MCF 10A (cell line): ENCODE measurements at regions of chr19 and their contacts with region 1.

Region 1: GRCh38 chr19:58572818-58573657 is at the start of gene MZF1:
- DNase-seq: peak; percentile 100
- H3K4me3 Mint-ChIP-seq: peak within 1 kb of the TSS; percentile 89
- H3K27ac Mint-ChIP-seq: peak within 1 kb of the TSS; percentile 98
- H3K4me1 Mint-ChIP-seq: peaks cover 23% of the 10 kb centered on the region
- H3K27me3 Mint-ChIP-seq: no peaks in the 10 kb centered on the region
- CTCF ChIP-seq: no peak
- total RNA-seq, gene MZF1: 50.7 and 51.9 TPM in 2 replicates

Region 2: GRCh38 chr19:58284199-58284598 is 288.8 kb before region 1 on chr19:
- CTCF ChIA-PET with region 1: no interaction called
- POLR2A ChIA-PET with region 1: no interaction called
- intact Hi-C with region 1: no loop called
- DNase-seq: no peak
- H3K4me3 Mint-ChIP-seq: no peak overlapping the region
- H3K27ac Mint-ChIP-seq: no peak overlapping the region
- H3K4me1 Mint-ChIP-seq: peaks cover 18% of the 10 kb centered on the region
- H3K27me3 Mint-ChIP-seq: no peaks in the 10 kb centered on the region
- CTCF ChIP-seq: no peak

Region 3: GRCh38 chr19:58400916-58401839 is 171.9 kb before region 1 on chr19:
- CTCF ChIA-PET with region 1: no interaction called
- POLR2A ChIA-PET with region 1: no interaction called
- intact Hi-C with region 1: no loop called
- DNase-seq: peak; percentile 100
- H3K4me3 Mint-ChIP-seq: peak overlapping the region; percentile 92
- H3K27ac Mint-ChIP-seq: peak overlapping the region; percentile 95
- H3K4me1 Mint-ChIP-seq: peaks cover 13% of the 10 kb centered on the region
- H3K27me3 Mint-ChIP-seq: no peaks in the 10 kb centered on the region
- CTCF ChIP-seq: no peak

Region 4: DNA sequence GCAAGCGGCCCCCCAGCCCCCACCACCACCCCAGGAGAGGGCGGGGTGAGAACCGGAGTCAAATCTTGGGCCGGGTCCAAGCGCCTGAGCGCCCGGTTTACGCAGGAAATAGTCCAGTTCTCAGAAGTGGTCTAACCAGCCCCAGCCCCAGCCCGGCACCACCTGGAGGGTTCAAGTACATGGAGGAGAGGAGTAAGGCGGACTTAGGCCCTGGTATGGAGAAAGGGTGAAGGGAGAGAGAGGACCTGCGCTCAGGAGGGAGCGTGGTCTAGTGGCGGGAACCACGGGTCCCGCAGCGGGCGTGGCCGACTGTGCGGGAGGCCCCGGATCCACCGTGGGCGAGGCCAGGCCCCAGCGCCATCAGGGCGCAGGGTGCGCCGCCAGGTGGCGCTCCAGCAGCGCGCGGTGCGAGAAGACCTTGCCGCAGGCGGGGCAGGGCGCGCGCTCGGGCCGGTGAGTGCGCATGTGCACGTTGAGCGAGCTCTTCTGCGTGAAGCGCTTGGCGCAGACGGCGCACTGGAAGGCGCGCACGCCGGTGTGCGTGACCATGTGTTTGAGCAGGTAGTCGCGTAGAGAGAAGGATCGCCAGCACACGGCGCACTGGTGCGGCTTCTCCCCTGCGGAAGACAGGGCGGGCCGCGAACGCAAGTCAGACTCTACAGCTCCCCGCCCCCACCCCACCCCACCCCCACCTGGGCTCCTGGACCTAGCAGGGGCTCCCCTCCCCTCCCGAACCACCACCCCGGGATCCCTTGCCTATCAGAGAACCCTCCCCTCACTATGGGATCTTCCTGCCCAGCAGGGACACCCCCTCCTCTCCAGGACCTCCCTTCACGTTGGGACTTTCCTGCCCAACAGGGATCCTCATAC is 59.1 kb before region 1 on chr19:
- CTCF ChIA-PET with region 1: interaction called, 9 read pairs
- POLR2A ChIA-PET with region 1: interaction called, 28 read pairs
- intact Hi-C with region 1: no loop called
- DNase-seq: peak; percentile 92
- H3K4me3 Mint-ChIP-seq: peak overlapping the region; percentile 77
- H3K27ac Mint-ChIP-seq: peak overlapping the region; percentile 86
- H3K4me1 Mint-ChIP-seq: peaks cover 14% of the 10 kb centered on the region
- H3K27me3 Mint-ChIP-seq: no peaks in the 10 kb centered on the region
- CTCF ChIP-seq: peak; percentile 97

Region 5: DNA sequence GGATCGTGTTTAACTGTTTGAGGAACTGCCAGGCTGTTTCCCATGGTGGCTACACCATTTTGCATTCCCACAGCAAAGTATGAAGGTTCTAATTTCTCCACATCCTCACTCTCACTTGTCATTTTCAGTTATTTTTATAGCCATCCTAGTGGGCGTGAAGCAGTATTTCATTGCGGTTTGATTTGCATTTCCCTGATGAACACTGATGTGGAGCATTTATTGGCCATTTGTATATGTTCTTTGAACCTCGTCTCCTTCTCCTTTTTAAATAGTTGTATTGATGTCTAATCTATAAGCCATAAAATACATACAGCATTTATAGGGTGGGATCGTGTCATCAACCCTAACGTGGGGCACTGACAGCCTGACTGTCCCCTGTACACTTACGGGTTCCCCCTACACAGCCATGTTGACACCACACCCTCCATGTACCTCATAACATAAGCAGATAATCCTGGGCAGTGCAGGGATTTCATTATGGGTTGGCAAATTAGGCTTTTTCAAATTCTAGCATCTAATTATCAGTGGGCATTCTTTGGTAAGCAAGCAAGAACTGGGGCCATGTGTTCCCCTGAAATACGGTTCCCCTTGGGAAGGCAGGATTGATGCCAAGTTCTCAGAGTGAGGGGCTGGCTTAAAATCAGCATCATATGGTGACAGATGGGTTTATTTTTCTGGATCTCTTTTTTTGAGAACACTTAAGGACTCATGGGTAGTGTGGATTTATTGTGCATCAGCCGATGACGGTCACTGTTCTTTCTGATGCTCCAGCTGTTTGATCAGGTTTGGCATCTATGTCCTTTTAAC is 41.8 kb before region 1 on chr19:
- CTCF ChIA-PET with region 1: no interaction called
- POLR2A ChIA-PET with region 1: no interaction called
- intact Hi-C with region 1: no loop called
- DNase-seq: no peak
- H3K4me3 Mint-ChIP-seq: no peak overlapping the region
- H3K27ac Mint-ChIP-seq: no peak overlapping the region
- H3K4me1 Mint-ChIP-seq: no peaks in the 10 kb centered on the region
- H3K27me3 Mint-ChIP-seq: peaks cover 32% of the 10 kb centered on the region
- CTCF ChIP-seq: no peak

Region 6: DNA sequence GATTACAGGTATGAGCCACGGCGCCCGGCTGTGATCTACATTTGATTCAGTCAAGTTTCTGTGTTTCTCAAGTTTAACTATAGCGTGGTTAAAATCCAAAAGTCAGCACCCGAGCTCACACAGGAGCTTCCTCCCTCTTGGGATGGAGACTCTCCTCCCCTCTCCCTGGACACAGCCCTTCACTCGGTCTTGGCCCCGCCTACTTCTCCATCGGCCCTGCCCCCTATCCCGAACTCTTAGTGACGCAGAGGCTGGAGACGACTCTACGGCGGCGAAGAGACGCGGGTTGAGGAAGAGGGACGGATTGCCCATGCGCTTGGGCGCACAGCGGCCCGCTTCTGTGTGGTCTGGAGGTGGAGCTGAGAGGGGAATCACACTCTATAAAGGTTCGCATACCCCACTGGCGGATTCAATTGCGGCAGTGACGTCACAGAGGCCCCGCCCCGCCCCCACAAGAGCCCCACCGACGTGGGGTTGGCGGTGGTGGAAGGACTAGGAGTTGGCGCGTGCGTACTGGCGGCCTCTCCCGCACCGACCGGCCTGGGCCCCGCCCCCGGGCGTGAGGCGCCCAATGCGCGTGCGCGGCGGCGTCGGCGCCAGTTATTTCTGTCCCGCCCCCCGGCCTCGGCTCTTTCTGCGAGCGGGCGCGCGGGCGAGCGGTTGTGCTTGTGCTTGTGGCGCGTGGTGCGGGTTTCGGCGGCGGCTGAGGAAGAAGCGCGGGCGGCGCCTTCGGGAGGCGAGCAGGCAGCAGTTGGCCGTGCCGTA is 29.0 kb before region 1 on chr19 and contains the start of gene TRIM28:
- CTCF ChIA-PET with region 1: no interaction called
- POLR2A ChIA-PET with region 1: interaction called, 23 read pairs
- intact Hi-C with region 1: loop called (anchors 2 kb)
- DNase-seq: peak; percentile 99
- H3K4me3 Mint-ChIP-seq: peak within 1 kb of the TSS; percentile 84
- H3K27ac Mint-ChIP-seq: peak within 1 kb of the TSS; percentile 98
- H3K4me1 Mint-ChIP-seq: peaks cover 20% of the 10 kb centered on the region
- H3K27me3 Mint-ChIP-seq: peaks cover 11% of the 10 kb centered on the region
- CTCF ChIP-seq: no peak
- total RNA-seq, gene TRIM28: 236 and 290 TPM in 2 replicates

Region 7: GRCh38 chr19:58558623-58559274 is 14.3 kb before region 1 on chr19:
- CTCF ChIA-PET with region 1: interaction called, 4 read pairs
- POLR2A ChIA-PET with region 1: interaction called, 44 read pairs
- intact Hi-C with region 1: loop called (anchors 2 kb)
- DNase-seq: peak; percentile 99
- H3K4me3 Mint-ChIP-seq: peak overlapping the region; percentile 98
- H3K27ac Mint-ChIP-seq: peak overlapping the region; percentile 99
- H3K4me1 Mint-ChIP-seq: peaks cover 34% of the 10 kb centered on the region
- H3K27me3 Mint-ChIP-seq: no peaks in the 10 kb centered on the region
- CTCF ChIP-seq: no peak